ENCODE measurements at regions of chr9 and their contacts with region 1.

Region 1: GRCh38 chr9:129460323-129461261 is 160.3 kb downstream of the C9orf50 start:
- DNase-seq: peak; percentile 92
- H3K4me3 Mint-ChIP-seq: peak overlapping the region; percentile 62
- H3K27ac Mint-ChIP-seq: peak overlapping the region; percentile 56
- H3K4me1 Mint-ChIP-seq: peaks cover 39% of the 10 kb centered on the region
- H3K27me3 Mint-ChIP-seq: peaks cover 14% of the 10 kb centered on the region

Region 2: GRCh38 chr9:129237195-129237611 is 223.4 kb before region 1 on chr9:
- CTCF ChIA-PET with region 1: no interaction called
- POLR2A ChIA-PET with region 1: no interaction called
- DNase-seq: peak; percentile 43
- H3K4me3 Mint-ChIP-seq: peak overlapping the region; percentile 60
- H3K27ac Mint-ChIP-seq: peak overlapping the region; percentile 70
- H3K4me1 Mint-ChIP-seq: peaks cover 51% of the 10 kb centered on the region
- H3K27me3 Mint-ChIP-seq: no peaks in the 10 kb centered on the region

Region 3: GRCh38 chr9:129436751-129437625 is 23.6 kb before region 1 on chr9:
- CTCF ChIA-PET with region 1: no interaction called
- POLR2A ChIA-PET with region 1: interaction called, 14 read pairs
- DNase-seq: no peak
- H3K4me3 Mint-ChIP-seq: peak overlapping the region; percentile 33
- H3K27ac Mint-ChIP-seq: no peak overlapping the region
- H3K4me1 Mint-ChIP-seq: peaks cover 22% of the 10 kb centered on the region
- H3K27me3 Mint-ChIP-seq: peaks cover 64% of the 10 kb centered on the region

Region 4: DNA sequence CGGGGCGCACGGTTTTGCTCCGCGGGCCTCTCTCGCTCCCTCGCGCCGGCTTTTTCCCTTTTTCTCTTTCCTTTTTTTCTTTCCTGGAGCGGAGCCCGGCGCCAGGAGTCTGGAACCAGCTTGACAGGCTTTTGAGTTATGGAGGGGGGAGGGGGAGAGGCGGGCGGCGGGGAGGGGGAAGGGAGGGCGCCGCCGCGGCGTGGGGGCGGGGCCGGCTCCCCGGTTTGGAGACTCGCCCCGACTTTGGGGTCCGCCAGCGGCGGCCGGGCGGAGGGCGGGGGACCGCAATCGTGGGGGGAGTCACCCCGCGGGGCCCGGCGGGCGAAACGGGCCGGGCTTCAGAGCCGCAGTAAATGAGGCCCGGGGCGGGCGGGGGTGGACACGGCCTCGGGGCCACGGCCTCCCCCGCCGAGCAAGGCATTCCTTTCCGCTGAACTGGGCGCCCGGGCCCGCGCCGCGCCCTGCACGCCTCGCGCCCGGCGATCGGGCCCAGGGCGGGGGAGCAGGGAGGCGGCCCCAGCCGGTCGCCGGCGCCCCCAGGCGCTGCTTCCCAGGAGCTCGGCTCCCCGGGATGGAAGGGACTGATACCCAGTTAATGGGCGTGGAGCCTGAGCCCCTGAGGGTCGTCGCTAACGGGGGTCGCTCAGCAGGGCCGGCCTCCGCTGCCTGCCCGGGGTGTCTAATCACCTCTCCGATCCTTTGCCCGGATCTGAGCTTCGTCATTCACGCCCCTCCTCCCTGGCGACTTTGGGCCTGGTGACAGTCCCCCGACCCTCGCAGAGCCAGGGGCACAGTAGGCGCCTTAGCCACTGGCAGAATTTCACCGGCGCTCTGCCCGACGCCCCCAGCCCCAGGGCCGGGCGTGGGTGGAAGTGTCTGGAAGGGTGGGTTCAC is 22.2 kb after region 1 on chr9:
- CTCF ChIA-PET with region 1: interaction called, 3 read pairs
- POLR2A ChIA-PET with region 1: interaction called, 14 read pairs
- DNase-seq: peak; percentile 26
- H3K4me3 Mint-ChIP-seq: peak overlapping the region; percentile 35
- H3K27ac Mint-ChIP-seq: no peak overlapping the region
- H3K4me1 Mint-ChIP-seq: peaks cover 37% of the 10 kb centered on the region
- H3K27me3 Mint-ChIP-seq: peaks cover 26% of the 10 kb centered on the region

Region 5: GRCh38 chr9:129489838-129490582 is 29.4 kb after region 1 on chr9:
- CTCF ChIA-PET with region 1: interaction called, 4 read pairs
- POLR2A ChIA-PET with region 1: interaction called, 16 read pairs
- DNase-seq: peak; percentile 59
- H3K4me3 Mint-ChIP-seq: peak overlapping the region; percentile 90
- H3K27ac Mint-ChIP-seq: peak overlapping the region; percentile 91
- H3K4me1 Mint-ChIP-seq: peaks cover 57% of the 10 kb centered on the region
- H3K27me3 Mint-ChIP-seq: no peaks in the 10 kb centered on the region

Region 6: DNA sequence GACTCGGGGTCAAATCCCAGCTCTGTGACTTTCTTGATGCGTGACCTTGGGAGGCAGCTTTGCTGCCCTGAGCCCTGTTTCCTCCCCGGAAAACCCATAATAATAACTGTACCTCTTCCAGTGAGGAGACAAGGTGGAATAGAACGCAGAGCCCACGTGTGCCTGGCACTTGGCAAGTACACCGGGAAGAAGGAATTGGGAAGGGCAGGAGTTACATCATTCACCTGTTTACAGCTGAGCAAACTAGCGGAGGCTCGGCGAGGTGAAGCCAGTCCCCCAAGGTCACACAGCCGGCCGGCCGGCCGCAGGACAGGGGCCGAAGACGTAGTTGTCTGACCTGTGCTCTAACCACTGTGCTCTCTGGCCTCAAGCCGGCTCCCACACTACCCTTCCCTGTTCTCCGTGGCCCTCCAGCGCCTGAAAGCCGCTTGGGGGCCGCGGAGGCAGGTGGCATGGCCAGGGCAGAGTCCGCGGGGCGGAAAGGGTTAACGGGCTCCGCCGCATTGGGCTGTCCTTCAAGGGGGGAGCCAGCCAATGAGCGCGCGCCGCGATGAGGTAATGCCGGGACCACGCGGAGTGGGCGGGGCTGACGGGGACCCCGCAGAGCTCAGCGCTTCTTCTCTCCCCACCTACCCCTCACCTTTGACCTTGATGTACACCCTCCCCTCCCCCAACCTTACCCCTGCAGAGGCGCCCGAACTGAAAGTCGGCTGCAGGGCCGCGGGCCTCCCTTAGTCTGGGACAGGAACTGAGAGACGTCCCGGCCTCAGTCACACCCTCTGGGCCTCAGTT is 35.1 kb after region 1 on chr9:
- CTCF ChIA-PET with region 1: interaction called, 4 read pairs
- POLR2A ChIA-PET with region 1: interaction called, 16 read pairs
- DNase-seq: peak; percentile 88
- H3K4me3 Mint-ChIP-seq: peak overlapping the region; percentile 78
- H3K27ac Mint-ChIP-seq: peak overlapping the region; percentile 63
- H3K4me1 Mint-ChIP-seq: peaks cover 41% of the 10 kb centered on the region
- H3K27me3 Mint-ChIP-seq: no peaks in the 10 kb centered on the region